MCF 10A (cell line): ENCODE measurements at regions of chr1 and their contacts with region 1.

Region 1: GRCh38 chr1:238252033-238252802 is 361.5 kb upstream of the ZP4 start:
- DNase-seq: peak; percentile 84
- H3K4me3 Mint-ChIP-seq: no peak overlapping the region
- H3K27ac Mint-ChIP-seq: no peak overlapping the region
- H3K4me1 Mint-ChIP-seq: peaks cover 7% of the 10 kb centered on the region
- H3K27me3 Mint-ChIP-seq: no peaks in the 10 kb centered on the region
- CTCF ChIP-seq: peak; percentile 87

Region 2: GRCh38 chr1:237953238-237953637 is 299.0 kb before region 1 on chr1:
- CTCF ChIA-PET with region 1: no interaction called
- POLR2A ChIA-PET with region 1: no interaction called
- intact Hi-C with region 1: loop called (anchors 5 kb)
- DNase-seq: peak; percentile 58
- H3K4me3 Mint-ChIP-seq: no peak overlapping the region
- H3K27ac Mint-ChIP-seq: no peak overlapping the region
- H3K4me1 Mint-ChIP-seq: no peaks in the 10 kb centered on the region
- H3K27me3 Mint-ChIP-seq: no peaks in the 10 kb centered on the region
- CTCF ChIP-seq: peak; percentile 27

Region 3: DNA sequence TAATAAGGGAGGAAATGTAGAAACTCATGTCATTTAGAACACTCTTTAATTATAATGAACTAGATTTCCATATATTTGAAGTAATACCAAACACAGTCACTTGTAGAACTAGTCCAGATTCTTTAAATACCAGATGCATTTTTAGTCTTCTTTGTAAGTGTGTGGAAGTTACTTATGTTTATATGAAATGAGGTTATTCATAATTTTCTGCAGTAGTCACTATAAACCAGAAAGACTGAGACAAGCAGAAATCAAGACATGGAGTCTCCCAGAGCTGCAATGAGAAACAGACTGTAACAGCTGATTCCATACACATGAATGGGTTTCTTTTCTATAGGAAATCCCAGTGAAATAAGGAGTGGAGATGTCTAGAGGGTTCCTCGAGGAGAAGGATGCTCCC is 144.9 kb before region 1 on chr1:
- CTCF ChIA-PET with region 1: no interaction called
- POLR2A ChIA-PET with region 1: no interaction called
- intact Hi-C with region 1: no loop called
- DNase-seq: no peak
- H3K4me3 Mint-ChIP-seq: no peak overlapping the region
- H3K27ac Mint-ChIP-seq: no peak overlapping the region
- H3K4me1 Mint-ChIP-seq: no peaks in the 10 kb centered on the region
- H3K27me3 Mint-ChIP-seq: no peaks in the 10 kb centered on the region
- CTCF ChIP-seq: no peak

Region 4: GRCh38 chr1:238242181-238242580 is 10.0 kb before region 1 on chr1:
- CTCF ChIA-PET with region 1: interaction called, 30 read pairs
- POLR2A ChIA-PET with region 1: interaction called, 4 read pairs
- intact Hi-C with region 1: no loop called
- DNase-seq: peak; percentile 40
- H3K4me3 Mint-ChIP-seq: no peak overlapping the region
- H3K27ac Mint-ChIP-seq: no peak overlapping the region
- H3K4me1 Mint-ChIP-seq: peaks cover 6% of the 10 kb centered on the region
- H3K27me3 Mint-ChIP-seq: no peaks in the 10 kb centered on the region
- CTCF ChIP-seq: no peak

Region 5: GRCh38 chr1:238606896-238607295 is 354.7 kb after region 1 on chr1:
- CTCF ChIA-PET with region 1: interaction called, 3 read pairs
- POLR2A ChIA-PET with region 1: interaction called, 3 read pairs
- intact Hi-C with region 1: loop called (anchors 10 kb)
- DNase-seq: peak; percentile 95
- H3K4me3 Mint-ChIP-seq: no peak overlapping the region
- H3K27ac Mint-ChIP-seq: peak overlapping the region; percentile 6
- H3K4me1 Mint-ChIP-seq: peaks cover 20% of the 10 kb centered on the region
- H3K27me3 Mint-ChIP-seq: no peaks in the 10 kb centered on the region
- CTCF ChIP-seq: no peak

Region 6: GRCh38 chr1:238951809-238952208 is 699.6 kb after region 1 on chr1:
- CTCF ChIA-PET with region 1: interaction called, 61 read pairs
- POLR2A ChIA-PET with region 1: interaction called, 3 read pairs
- intact Hi-C with region 1: loop called (anchors 1 kb)
- DNase-seq: peak; percentile 82
- H3K4me3 Mint-ChIP-seq: no peak overlapping the region
- H3K27ac Mint-ChIP-seq: no peak overlapping the region
- H3K4me1 Mint-ChIP-seq: peaks cover 12% of the 10 kb centered on the region
- H3K27me3 Mint-ChIP-seq: no peaks in the 10 kb centered on the region
- CTCF ChIP-seq: peak; percentile 89

Region 7: DNA sequence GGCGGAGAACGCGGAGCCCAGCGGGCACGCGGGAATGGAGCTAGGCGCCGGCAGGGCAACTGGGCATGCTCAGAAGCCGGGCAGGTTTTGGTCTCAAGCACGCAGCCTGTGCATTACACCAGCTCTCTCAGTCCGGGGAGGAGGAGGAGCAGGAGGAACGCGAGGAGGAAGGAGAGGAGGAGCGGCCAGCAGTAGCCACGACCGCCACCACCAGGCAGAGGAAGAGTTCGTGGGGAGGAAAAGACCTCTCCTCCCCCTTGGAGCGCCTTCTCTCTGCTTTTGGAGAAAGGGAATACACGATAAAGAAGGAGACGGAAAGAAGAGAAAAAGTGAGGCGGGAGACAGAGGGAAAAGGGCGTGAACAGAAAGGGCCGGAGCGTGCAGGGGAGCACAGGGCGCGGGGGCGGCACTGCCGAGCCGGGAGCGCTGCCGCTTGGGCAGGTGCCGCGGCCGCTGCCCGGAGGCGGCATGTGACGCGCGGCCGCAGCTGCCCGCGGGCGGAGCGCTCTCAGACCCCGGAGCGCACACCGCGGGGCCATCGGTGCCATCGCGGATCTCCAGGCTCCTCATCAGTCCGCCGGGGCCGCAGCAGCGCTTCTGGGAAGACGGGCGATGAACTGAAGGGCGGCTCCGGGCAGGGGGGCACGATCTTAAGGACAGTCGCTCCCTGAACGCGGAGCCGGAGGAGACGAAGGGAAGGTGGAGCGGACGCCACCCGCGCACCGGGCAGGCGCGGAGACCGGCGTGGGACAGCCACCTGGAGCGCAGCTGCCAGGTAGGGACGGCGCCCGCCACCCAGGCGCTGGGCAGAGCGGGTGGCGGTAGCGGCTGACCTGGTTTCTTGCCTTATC is 1134.5 kb after region 1 on chr1 and contains the start of gene CHRM3:
- CTCF ChIA-PET with region 1: no interaction called
- POLR2A ChIA-PET with region 1: no interaction called
- intact Hi-C with region 1: loop called (anchors 1 kb)
- DNase-seq: peak; percentile 96
- H3K4me3 Mint-ChIP-seq: peak within 1 kb of the TSS; percentile 89
- H3K27ac Mint-ChIP-seq: peak within 1 kb of the TSS; percentile 1
- H3K4me1 Mint-ChIP-seq: peaks cover 26% of the 10 kb centered on the region
- H3K27me3 Mint-ChIP-seq: peaks cover 55% of the 10 kb centered on the region
- CTCF ChIP-seq: peak; percentile 28
- total RNA-seq, gene CHRM3: 0.56 and 0.71 TPM in 2 replicates